ENCODE measurements at regions of chr12 and their contacts with region 1.

Region 1: DNA sequence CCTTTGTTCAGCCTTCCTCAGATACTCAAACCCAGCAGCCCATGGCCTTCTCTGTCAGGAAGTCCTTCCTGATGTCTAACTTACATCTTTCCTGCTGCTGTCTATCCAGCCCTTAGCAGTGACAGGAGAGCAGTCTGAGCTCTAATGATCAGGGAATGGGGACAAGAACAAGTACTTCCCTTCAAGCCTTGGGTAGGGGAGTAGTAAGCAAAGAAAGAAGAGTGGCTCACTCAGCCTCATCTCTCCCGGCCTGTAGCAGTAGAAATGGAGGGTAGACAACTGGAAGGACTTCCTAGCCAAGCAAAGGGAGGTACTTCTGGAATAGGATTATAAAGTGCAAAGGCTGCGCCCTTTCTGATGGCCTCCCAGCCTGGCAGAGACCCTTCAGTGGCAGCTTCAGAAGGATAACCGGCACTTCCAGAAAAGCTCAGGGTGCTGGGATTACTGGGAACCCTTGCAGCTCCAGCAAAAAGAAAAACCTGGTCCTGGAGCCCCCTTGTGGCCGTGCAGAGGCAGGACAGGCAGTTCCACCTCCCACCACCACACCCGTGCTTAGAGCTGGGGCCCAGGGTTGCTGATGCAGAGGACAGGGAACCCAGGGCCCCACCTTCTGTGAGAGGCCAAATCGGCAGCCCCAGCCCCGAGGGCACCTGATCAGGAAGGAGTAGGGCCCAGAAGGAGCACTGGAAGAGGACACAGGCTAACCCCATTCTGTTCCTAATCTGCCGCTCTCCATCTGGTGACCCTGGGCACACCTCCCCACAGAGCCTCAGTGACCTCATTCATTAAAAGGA is 12.4 kb upstream of the SMUG1 start:
- DNase-seq: peak in 1 of 2 experiments; percentile 90
- H3K4me3 ChIP-seq: no peak overlapping the region
- H3K27ac ChIP-seq: no peak overlapping the region
- H3K4me1 ChIP-seq: peaks cover 0 to 5% (median 0%) of the 10 kb centered on the region in 4 experiments; a peak in 3 of 7 replicates
- H3K27me3 ChIP-seq: peaks cover 6 to 61% (median 39%) of the 10 kb centered on the region in 4 experiments
- CTCF ChIP-seq: peak; percentile 97 to 100 (median 99)
- EP300 ChIP-seq: no peak
- POLR2A ChIP-seq: no peak
- RAD21 ChIP-seq: peak; percentile 83 to 89

Region 2: GRCh38 chr12:54005853-54006686 is 195.1 kb before region 1 on chr12:
- CTCF ChIA-PET with region 1: interaction called, 154 read pairs
- POLR2A ChIA-PET with region 1: interaction called, 3 read pairs
- DNase-seq: peak; percentile 50 to 98
- H3K4me3 ChIP-seq: no peak overlapping the region
- H3K27ac ChIP-seq: no peak overlapping the region
- H3K4me1 ChIP-seq: peaks cover 0 to 4% (median 0%) of the 10 kb centered on the region in 4 experiments; a peak in 2 of 7 replicates
- H3K27me3 ChIP-seq: peaks cover 97 to 100% (median 100%) of the 10 kb centered on the region in 4 experiments
- CTCF ChIP-seq: peak; percentile 88 to 97 (median 89)
- EP300 ChIP-seq: no peak
- POLR2A ChIP-seq: no peak
- RAD21 ChIP-seq: peak; percentile 98

Region 3: GRCh38 chr12:54059668-54060067 is 141.5 kb before region 1 on chr12:
- CTCF ChIA-PET with region 1: interaction called, 16 read pairs
- POLR2A ChIA-PET with region 1: interaction called, 3 read pairs
- DNase-seq: no peak
- H3K4me3 ChIP-seq: no peak overlapping the region
- H3K27ac ChIP-seq: no peak overlapping the region
- H3K4me1 ChIP-seq: peaks cover 4 to 14% (median 7%) of the 10 kb centered on the region in 4 experiments
- H3K27me3 ChIP-seq: peaks cover 83 to 98% (median 95%) of the 10 kb centered on the region in 4 experiments
- CTCF ChIP-seq: no peak
- EP300 ChIP-seq: no peak
- POLR2A ChIP-seq: no peak
- RAD21 ChIP-seq: no peak

Region 4: DNA sequence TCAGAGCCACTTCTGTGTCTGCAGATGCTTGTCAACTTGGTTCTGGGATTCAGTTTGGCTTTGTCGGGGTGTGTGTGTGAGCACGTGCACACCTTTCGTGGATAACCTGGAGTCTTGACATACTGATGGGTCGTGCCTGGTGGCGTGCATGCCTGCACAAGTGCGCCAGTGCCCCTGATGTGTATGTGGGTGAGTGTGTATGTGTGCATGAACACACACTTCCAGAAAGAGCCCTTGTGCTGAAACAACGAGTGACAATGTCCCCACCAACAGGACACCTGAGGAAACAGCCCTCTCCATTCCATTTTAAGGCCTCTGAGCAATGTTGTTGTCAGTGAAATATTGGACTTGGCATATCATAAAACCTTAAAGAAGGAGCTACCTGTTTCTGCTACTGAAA is 66.3 kb before region 1 on chr12:
- CTCF ChIA-PET with region 1: interaction called, 185 read pairs
- POLR2A ChIA-PET with region 1: interaction called, 3 read pairs
- DNase-seq: no peak
- H3K4me3 ChIP-seq: no peak overlapping the region
- H3K27ac ChIP-seq: no peak overlapping the region
- H3K4me1 ChIP-seq: peaks cover 0 to 3% (median 1%) of the 10 kb centered on the region in 4 experiments; a peak in 2 of 7 replicates
- H3K27me3 ChIP-seq: peaks cover 25 to 89% (median 67%) of the 10 kb centered on the region in 4 experiments
- CTCF ChIP-seq: peak in 1 of 3 experiments; percentile 37; a peak in 1 of 4 replicates
- EP300 ChIP-seq: no peak
- POLR2A ChIP-seq: no peak
- RAD21 ChIP-seq: peak; percentile 31 to 50; a peak in 2 of 4 replicates

Region 5: DNA sequence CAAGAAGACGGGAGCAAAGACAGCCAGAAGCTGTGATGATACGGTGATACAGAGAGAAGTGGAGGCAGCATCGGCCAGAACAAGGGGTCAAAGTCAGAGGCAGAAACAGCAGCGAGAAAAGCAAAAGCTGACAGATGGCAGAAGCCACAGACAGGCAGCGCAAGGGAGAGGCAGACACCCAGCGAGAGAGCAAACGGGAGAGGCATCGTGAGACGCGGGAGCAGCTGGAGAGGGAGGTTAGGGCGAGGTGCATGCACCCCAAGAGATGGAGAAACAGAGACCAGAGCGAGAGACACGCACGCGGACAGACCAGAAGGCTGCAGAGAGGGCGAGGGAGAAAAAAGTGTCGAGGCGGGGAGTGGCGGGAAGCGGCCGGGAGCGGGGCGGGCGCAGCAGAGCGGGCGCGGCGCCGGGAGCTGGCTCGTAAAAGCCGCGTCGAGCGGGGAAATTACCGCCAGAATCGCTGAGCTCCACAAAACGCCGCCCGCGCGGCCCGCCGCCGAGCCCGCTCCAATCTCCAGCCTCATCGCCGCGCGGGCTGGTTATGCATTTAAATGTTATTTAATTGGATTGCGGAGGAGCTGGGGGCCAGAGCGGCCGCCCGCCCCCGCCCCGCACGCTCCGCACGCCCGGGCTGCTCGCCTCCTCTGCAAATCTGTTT is 28.0 kb before region 1 on chr12:
- CTCF ChIA-PET with region 1: interaction called, 32 read pairs
- POLR2A ChIA-PET with region 1: no interaction called
- DNase-seq: peak in 1 of 2 experiments; percentile 66
- H3K4me3 ChIP-seq: peak overlapping the region; percentile 34 to 58 (median 42); a peak in 5 of 8 replicates
- H3K27ac ChIP-seq: no peak overlapping the region
- H3K4me1 ChIP-seq: peaks cover 0 to 8% (median 3%) of the 10 kb centered on the region in 4 experiments; a peak in 4 of 7 replicates
- H3K27me3 ChIP-seq: peaks cover 42 to 57% (median 51%) of the 10 kb centered on the region in 4 experiments
- CTCF ChIP-seq: no peak
- EP300 ChIP-seq: no peak
- POLR2A ChIP-seq: no peak
- RAD21 ChIP-seq: no peak

Measured in H1 (cell line).